AG04450 (cell line): ENCODE measurements at regions of chr17 and their contacts with region 1.

Region 1: DNA sequence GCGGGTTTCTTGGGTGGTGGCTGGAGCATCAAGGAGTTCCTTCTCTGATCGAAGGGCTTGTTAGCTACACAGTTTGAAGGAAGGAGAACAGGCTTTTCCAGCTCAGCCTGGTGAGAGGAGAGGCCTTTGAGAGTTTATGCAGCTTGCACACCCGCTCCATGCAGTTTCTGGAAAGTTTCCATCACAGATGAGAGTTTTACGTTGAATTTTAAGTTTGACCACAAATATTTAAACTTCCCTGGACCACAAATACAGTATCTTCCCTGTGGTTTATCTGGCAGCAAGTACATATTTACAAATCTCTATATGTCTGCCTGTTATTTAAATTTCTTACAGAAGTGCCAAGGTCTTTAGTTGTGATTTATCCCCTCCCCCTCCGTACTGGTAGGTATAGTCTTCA is 56.8 kb downstream of the HIC1 start:
- DNase-seq: peak; percentile 96
- H3K4me3 ChIP-seq: no peak overlapping the region
- H3K27ac ChIP-seq: peak overlapping the region; percentile 80
- H3K27me3 ChIP-seq: no peaks in the 10 kb centered on the region
- CTCF ChIP-seq: no peak

Region 2: DNA sequence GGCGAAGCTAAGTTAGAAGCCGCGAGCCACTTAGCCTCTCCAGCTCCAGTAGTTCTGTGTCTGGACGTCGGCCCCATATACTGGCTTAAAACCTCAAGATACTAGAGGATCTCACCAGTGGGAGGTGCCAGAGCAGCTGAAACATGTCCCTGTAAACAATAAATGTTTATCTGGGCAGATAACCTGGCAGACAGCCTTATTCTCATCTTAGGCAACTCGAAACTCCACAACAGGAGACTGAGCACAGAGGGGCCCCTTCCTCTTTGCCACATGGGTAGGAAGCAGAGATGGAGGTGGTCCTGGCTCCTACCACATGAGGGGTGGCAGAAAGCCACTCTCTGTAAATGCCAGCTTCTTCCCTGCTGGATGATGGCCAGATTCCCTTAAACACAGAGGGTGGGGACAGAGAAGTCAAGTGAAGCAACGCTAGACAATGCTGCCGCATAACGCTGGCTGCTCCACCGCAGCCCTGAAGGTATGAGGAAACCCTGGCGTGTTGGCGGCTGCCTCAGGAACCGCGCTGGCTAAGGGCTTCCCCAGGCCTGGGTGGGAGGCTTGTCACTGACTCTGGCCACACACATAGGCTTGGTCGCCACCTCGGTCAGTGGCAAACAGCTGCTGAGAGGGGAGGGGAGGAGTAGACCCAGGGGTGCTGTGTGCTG is 11.1 kb after region 1 on chr17:
- CTCF ChIA-PET with region 1: interaction called, 14 read pairs
- POLR2A ChIA-PET with region 1: interaction called, 7 read pairs
- DNase-seq: peak; percentile 66
- H3K4me3 ChIP-seq: peak overlapping the region; percentile 29
- H3K27ac ChIP-seq: peak overlapping the region; percentile 90
- H3K27me3 ChIP-seq: no peaks in the 10 kb centered on the region
- CTCF ChIP-seq: peak; percentile 36